GM12878 (cell line): ENCODE measurements at regions of chr11 and their contacts with region 1.

Region 1: DNA sequence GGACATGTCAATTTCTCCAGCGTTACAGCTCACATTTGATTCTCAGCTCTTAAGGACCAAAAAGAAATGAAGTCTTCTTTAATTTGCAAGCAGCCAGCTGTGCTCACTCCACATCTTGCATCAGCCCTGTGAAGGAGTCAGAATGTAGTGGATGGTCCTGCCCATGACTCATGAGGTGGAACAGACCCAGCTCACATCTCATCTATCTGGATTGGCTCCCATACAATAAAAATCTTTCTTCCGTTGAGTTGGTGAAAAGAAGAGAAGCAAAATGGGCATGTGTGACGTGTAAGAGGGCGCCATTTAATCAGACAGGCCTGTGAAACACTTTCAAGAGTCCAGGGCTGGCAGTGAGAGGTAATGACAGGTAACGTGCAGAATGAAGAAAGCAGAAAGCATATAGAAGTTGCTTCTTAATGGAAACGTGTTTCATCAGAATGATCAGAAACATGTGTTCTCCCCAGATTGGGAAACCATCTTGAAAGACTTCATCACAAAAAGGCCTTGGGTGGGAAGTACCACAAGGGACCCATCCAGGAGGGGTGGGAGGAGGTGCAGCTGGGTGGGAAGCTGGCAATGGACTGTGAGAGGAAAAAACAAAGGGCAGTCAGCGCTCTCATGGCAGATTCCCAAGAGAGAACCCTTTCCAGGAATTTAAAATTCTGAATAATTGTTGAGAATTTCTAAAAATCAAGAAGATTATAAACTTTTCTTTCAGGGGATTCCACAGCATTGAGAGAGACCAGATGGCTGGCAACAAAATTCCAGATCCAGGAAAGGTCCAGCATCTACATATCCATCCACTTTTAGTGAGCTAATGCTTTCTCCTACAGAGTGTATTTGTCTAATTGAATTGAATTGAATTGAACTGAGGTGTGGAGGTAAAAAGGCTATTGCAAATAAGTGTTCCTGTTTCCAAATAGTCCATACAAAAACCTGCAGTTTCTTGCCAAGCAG is 57.0 kb downstream of the ETS1 start:
- DNase-seq: no peak
- ATAC-seq: no peak
- H3K4me3 ChIP-seq: no peak overlapping the region
- H3K27ac ChIP-seq: no peak overlapping the region
- H3K4me1 ChIP-seq: no peaks in the 10 kb centered on the region
- H3K27me3 ChIP-seq: no peaks in the 10 kb centered on the region
- CTCF ChIP-seq: no peak
- EP300 ChIP-seq: no peak
- POLR2A ChIP-seq: no peak
- RAD21 ChIP-seq: no peak

Region 2: DNA sequence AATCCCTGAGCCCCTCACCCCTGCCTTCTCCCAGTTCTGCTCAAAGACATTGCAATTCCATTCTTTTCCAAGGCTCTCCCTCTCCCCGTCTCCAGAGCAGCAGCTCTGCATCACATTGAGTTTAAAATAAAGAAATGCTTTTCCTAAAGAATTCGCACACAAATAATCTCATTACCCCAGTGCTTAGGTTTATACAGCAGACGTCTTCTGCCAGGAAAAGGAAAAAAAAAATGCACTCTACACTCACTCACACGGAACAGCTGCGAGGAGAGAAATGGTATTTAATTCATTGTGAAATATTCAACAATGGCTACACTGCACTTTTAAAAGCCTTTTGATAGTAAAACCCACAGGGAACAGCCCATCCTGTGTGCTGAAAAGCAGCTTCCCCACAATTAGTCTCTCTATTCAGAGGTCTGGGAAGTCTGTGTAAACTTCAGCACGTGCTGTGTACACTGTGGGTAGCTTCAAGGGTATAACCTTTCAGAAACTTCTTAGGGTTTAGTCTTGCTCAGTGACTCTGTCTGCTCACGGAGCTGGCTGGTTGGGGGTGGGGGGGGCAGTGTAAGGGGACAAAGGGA is 14.2 kb after region 1 on chr11:
- CTCF ChIA-PET with region 1: interaction called, 4 read pairs
- POLR2A ChIA-PET with region 1: interaction called, 8 read pairs
- RAD21 ChIA-PET with region 1: interaction called, 4 read pairs
- SMC1A ChIA-PET with region 1: interaction called, 20 read pairs
- in situ Hi-C with region 1: no loop called
- intact Hi-C with region 1: no loop called
- DNase-seq: no peak
- ATAC-seq: peak; percentile 16; the same call in 1 of the 3 replicates
- H3K4me3 ChIP-seq: no peak overlapping the region
- H3K27ac ChIP-seq: no peak overlapping the region
- H3K4me1 ChIP-seq: peaks cover 8% of the 10 kb centered on the region
- H3K27me3 ChIP-seq: no peaks in the 10 kb centered on the region
- CTCF ChIP-seq: no peak
- EP300 ChIP-seq: no peak
- POLR2A ChIP-seq: no peak
- RAD21 ChIP-seq: no peak